Right cardiac atrium (tissue), 5 donors: ENCODE measurements at regions of chr2 and their contacts with region 1.

Region 1: DNA sequence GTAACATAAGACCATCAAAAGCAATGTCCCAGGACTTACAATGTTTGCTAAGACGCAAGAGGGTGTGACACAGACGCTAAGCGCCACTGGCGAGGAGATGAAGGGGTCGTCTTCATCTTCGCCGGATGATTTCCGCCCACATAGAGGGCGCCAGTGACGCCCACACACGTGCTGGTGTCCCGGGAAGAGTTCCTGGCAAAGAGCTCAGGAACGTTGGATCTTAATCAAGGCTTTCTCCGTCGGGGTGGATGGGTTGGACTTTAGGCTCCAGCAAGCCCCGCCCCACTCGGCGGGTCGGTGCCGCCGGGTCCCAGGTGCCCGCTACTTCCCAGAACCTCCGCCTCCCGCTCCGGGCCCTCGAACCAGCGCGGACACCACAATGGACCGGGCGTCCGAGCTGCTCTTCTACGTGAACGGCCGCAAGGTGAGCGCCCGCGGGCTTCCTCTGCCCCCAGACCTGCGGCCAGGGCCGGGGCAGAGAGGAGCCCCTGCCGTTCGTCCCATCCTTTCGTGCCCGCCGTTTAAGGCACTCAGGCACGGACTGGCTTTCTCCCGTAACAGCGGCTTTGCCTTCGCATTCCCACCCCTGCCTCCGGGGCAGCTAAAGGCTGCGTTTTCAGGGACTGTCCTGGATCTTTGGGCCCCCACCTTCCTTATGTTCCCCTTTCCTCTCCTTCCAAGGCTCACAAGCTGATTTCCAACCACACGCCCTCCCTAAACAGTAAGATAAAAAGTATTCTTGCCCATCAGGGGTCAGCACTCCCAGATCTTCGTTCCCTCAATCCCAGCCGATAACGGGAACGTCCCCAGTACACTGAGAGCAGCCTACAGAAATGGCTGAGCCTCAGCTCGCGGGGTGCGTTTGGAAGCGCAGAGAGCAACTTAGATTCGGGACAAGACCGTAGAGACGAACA is at the start of gene AOX1:
- DNase-seq: peak; percentile 67 to 89 (median 79)
- ATAC-seq: peak; percentile 89 to 90
- H3K4me3 ChIP-seq: peak within 1 kb of the TSS; percentile 43
- H3K27ac ChIP-seq: peak within 1 kb of the TSS; percentile 14
- H3K4me1 ChIP-seq: peaks cover 3% of the 10 kb centered on the region
- H3K27me3 ChIP-seq: no peaks in the 10 kb centered on the region
- total RNA-seq, gene AOX1: 8.5 to 36.0 (median 18.6) TPM

Region 2: GRCh38 chr2:199985625-199986207 is 600.3 kb before region 1 on chr2:
- intact Hi-C with region 1: no loop called
- DNase-seq: peak in 2 of 3 donors; percentile 43 to 73
- ATAC-seq: peak; percentile 47 to 58
- H3K4me3 ChIP-seq: no peak overlapping the region
- H3K27ac ChIP-seq: no peak overlapping the region
- H3K4me1 ChIP-seq: peaks cover 3% of the 10 kb centered on the region
- H3K27me3 ChIP-seq: no peaks in the 10 kb centered on the region

Region 3: DNA sequence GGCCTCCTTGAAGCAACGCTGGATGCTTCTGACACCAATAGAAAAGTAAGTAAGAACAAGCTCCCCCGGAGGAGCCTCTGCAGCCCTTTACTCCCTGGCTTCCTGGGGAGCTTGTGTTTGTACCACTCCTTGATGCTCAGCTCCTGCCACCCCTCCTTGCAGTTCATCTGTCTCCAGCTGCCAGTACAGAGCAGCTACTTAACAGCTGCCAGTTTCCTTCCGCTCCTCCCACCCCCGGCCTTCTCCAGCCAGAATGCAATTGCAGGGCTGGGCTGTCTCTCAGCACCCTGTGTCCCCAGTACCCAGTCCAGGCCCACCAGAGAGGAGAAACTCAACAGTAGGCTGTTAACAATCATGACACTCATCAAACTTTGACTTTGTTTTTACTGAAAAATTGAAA is 109.2 kb after region 1 on chr2:
- intact Hi-C with region 1: loop called in 1 of 4 experiments (anchors 10 kb)
- DNase-seq: peak; percentile 60 to 85 (median 73)
- ATAC-seq: peak; percentile 77 to 89
- H3K4me3 ChIP-seq: no peak overlapping the region
- H3K27ac ChIP-seq: no peak overlapping the region
- H3K4me1 ChIP-seq: no peaks in the 10 kb centered on the region
- H3K27me3 ChIP-seq: no peaks in the 10 kb centered on the region

Region 4: GRCh38 chr2:200850512-200851256 is 264.7 kb after region 1 on chr2:
- intact Hi-C with region 1: no loop called
- DNase-seq: no peak
- ATAC-seq: peak; percentile 13 to 41
- H3K4me3 ChIP-seq: no peak overlapping the region
- H3K27ac ChIP-seq: peak overlapping the region; percentile 16
- H3K4me1 ChIP-seq: no peaks in the 10 kb centered on the region
- H3K27me3 ChIP-seq: no peaks in the 10 kb centered on the region